Spleen (tissue), 13 donors: ENCODE measurements at regions of chr4 and their contacts with region 1.

Region 1: DNA sequence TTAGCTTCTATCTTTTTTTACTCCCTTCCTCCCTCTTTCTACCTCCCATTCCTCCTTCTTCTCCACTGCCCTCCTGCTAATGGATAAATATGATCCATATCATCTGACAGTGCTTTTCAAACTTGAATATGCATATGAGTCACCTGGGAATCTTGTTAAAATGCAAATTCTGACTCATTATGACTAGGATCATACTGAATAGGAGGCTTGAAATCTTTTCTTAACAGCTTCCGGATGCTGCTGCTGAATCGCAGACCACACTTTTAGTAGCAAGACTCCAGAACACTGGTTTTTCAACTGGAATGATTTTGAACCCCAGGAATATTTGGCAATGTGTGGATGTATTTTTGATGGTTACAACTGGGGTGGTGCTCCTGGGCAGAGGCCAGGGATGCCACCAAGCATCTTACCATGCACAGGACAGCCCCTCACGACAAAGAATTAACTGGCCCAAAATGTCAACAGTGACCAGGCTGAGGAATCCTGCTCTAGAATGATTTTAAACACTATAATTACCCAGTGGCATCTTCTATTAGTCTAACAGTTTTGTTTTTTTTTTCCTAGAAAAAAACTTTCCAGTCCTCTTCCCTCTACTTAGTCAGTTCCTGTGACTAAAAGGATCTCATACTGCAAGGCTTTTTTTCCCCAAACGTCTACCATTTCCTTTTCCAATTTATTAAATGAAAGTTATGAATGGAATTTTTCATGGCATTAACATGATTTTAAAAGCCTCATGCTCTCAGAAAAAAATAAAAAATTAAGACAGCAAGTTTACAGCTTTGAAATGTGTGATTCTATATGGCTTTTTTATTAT is 10.6 kb upstream of the PYURF start:
- DNase-seq: no peak
- H3K4me3 ChIP-seq: no peak overlapping the region
- H3K27ac ChIP-seq: peak overlapping the region in 4 of 8 donors; percentile 5 to 23 (median 16)
- H3K4me1 ChIP-seq: peaks cover 0 to 3% (median 2%) of the 10 kb centered on the region in 6 donors
- H3K27me3 ChIP-seq: peaks cover 0 to 4% (median 0%) of the 10 kb centered on the region in 7 donors
- CTCF ChIP-seq: no peak
- POLR2A ChIP-seq: no peak

Region 2: DNA sequence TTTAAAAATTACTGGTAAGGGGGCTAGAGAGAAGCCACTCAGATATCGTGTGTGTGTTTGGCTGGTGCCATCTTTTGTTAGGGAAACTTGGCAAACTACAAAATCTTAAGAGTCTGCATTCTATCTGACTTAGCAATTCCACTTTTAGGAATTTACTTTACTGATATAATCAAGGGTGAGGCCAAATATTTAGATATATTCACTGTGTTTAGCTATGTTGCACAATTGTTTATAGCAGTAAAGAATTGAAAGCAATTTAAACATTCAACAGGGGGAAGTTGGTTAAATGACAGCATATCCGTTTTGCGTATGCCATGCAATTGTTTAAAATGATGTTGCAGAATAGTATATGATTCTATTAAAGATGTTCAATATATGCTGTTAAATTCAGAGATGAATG is 51.8 kb after region 1 on chr4:
- intact Hi-C with region 1: loop called (anchors 5 kb)
- DNase-seq: no peak
- H3K4me3 ChIP-seq: no peak overlapping the region
- H3K27ac ChIP-seq: no peak overlapping the region
- H3K4me1 ChIP-seq: peaks cover 0 to 3% (median 1%) of the 10 kb centered on the region in 6 donors
- H3K27me3 ChIP-seq: no peaks in the 10 kb centered on the region
- CTCF ChIP-seq: no peak
- POLR2A ChIP-seq: no peak

Region 3: DNA sequence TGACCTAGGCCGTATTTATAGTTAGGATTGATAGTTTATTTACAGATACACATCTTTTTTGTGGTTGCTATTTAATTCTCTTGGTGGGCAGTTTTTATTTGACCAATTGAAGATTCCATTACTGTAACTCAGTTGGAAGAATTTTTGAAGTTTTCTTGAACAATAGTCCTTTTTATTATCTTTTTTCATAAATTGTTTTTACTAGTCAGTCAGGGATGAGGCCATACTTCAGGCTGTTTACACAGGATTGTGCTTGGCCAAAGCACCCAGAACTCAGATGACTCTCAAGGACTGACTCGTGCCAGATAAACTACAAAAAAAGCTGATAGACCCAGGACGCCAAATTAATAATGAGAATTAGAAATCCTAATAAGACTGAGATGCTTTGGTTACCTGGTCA is 65.2 kb after region 1 on chr4:
- intact Hi-C with region 1: no loop called
- DNase-seq: no peak
- H3K4me3 ChIP-seq: no peak overlapping the region
- H3K27ac ChIP-seq: peak overlapping the region in 7 of 8 donors; percentile 9 to 55 (median 42)
- H3K4me1 ChIP-seq: peaks cover 21 to 79% (median 41%) of the 10 kb centered on the region in 6 donors
- H3K27me3 ChIP-seq: no peaks in the 10 kb centered on the region
- CTCF ChIP-seq: no peak
- POLR2A ChIP-seq: no peak

Region 4: GRCh38 chr4:88659055-88659889 is 125.1 kb after region 1 on chr4:
- intact Hi-C with region 1: loop called (anchors 5 kb)
- DNase-seq: no peak
- H3K4me3 ChIP-seq: no peak overlapping the region
- H3K27ac ChIP-seq: peak overlapping the region in 2 of 8 donors; percentile 16 to 22
- H3K4me1 ChIP-seq: no peaks in the 10 kb centered on the region
- H3K27me3 ChIP-seq: no peaks in the 10 kb centered on the region
- CTCF ChIP-seq: peak in 10 of 11 experiments; percentile 33 to 77 (median 62)
- POLR2A ChIP-seq: no peak

Region 5: GRCh38 chr4:89024051-89024675 is 490.0 kb after region 1 on chr4:
- intact Hi-C with region 1: loop called (anchors 10 kb)
- DNase-seq: no peak
- H3K4me3 ChIP-seq: no peak overlapping the region
- H3K27ac ChIP-seq: no peak overlapping the region
- H3K4me1 ChIP-seq: peaks cover 0 to 6% (median 0%) of the 10 kb centered on the region in 6 donors
- H3K27me3 ChIP-seq: no peaks in the 10 kb centered on the region
- CTCF ChIP-seq: peak; percentile 73 to 89 (median 83)
- POLR2A ChIP-seq: no peak